KBM-7 (cell line): ENCODE measurements at regions of chr17 and their contacts with region 1.

Region 1: DNA sequence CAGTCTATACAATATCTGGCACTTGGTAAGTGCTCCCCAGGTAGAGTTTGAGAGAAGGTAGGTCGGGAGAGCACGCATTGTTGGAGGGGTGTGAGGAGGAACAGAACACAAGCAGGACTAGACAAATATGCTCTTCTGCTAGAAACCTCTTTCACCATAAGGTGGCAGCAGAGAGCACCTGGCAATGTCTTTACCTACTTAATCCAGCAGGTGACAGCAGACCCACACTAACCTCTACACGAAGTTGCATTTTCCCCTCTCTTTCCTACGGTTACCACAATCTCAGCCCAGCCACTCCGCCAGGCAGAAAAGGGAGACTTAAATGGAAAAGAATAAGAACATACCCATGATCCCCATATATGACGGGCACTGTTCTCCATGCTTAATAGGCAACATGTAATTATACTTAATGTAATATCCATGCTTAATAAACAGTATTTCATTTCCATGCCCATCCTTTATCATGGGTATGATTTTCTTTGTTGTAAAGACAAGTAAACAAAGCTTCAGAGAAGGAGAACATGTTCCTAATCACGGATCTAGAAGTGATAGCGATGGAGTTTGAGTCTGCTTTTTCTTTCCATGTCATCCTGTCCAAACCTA is 55.1 kb upstream of the CCL2 start:
- DNase-seq: peak; percentile 86

Region 2: GRCh38 chr17:34361478-34362061 is 161.5 kb after region 1 on chr17:
- in situ Hi-C with region 1: loop called (anchors 10 kb)
- DNase-seq: peak; percentile 88